ENCODE measurements at regions of chr5 and their contacts with region 1.

Region 1: GRCh38 chr5:43040287-43041098 is at the start of gene ANXA2R:
- DNase-seq: peak; percentile 90
- ATAC-seq: peak; percentile 64
- total RNA-seq, gene ANXA2R: 0.94 TPM

Region 2: DNA sequence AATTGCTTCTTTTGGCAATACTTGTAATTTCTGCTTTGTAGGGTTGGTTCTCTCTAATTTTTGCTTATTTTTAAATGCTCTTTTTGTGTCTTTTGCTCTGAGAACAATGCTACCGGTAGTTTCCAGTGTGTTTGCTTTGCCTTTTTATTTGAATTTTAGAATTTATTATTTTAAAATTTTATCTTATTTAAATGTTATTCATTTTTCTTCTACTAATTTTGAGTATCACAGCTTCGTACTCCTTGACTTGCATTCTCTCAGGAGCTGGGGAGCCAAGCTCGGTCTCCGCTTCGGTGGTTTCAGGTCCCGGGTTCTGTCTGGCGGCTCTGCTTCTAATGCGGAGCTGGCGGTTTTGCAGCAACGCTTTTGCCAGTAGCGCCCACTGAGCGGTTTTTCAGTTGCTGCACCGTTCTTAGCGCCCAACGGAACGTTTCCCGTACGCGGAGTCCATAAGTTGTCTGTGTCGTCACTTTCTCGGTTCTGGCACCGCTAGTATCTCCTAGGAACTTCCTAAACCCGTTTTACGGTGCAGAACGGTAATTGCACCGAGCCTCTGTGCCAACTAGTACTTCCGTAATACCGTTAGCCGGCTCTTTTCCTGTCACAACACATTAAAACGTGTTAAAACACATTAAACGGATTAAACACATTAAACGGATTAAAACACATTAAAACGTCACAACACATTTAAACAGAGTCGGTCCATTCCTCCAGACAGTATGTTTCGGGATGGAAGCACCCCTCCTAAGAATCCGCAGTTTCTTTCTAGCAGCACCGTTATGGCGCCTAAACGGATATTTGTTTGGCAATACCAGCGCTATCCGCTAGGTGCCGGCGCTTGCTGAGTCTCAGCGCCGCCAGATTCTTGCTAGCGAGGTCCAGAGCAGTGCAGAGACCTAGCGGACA is 46.0 kb before region 1 on chr5:
- intact Hi-C with region 1: loop called (anchors 5 kb)
- DNase-seq: peak; percentile 89
- ATAC-seq: peak; percentile 80

Region 3: GRCh38 chr5:43008369-43009153 is 31.9 kb before region 1 on chr5:
- intact Hi-C with region 1: loop called (anchors 5 kb)
- DNase-seq: peak; percentile 90
- ATAC-seq: peak; percentile 91